ENCODE measurements at regions of chr9 and their contacts with region 1.

Region 1: GRCh38 chr9:121107041-121107440 is 32.3 kb downstream of the CNTRL start:
- DNase-seq: peak; percentile 39
- H3K4me3 ChIP-seq: no peak overlapping the region
- H3K27ac ChIP-seq: no peak overlapping the region
- H3K4me1 ChIP-seq: no peaks in the 10 kb centered on the region
- H3K27me3 ChIP-seq: no peaks in the 10 kb centered on the region
- CTCF ChIP-seq: peak; percentile 46 to 69

Region 2: DNA sequence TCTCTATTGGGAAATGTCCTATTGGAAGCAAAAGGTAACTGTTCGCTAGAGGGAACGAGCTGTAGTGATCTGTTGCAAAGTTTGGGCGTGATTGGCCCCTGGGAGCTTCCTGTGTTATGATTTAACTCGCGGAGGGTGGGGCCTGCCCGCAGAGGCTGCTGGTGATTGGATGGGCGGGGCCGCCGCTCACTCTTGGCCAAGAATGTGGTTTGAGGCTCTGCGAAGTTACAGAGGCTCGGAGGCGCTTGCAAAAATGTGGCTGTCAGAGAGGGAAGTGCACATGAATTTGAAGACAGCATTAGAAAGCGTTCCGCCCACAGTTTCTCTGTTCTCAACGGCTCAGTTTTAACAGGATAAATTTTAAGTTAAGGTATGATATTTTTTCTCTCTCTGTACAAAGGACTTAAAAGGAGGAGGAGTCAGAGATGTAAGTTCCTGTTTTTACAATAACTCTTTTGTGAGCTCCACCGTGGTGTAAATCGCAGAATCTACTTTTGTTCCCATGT is 14.6 kb after region 1 on chr9:
- CTCF ChIA-PET with region 1: no interaction called
- dilution Hi-C with region 1: no loop called
- in situ Hi-C with region 1: no loop called
- intact Hi-C with region 1: no loop called
- DNase-seq: peak; percentile 96
- H3K4me3 ChIP-seq: peak overlapping the region; percentile 49 to 88 (median 58)
- H3K27ac ChIP-seq: peak overlapping the region; percentile 71
- H3K4me1 ChIP-seq: peaks cover 11% of the 10 kb centered on the region
- H3K27me3 ChIP-seq: no peaks in the 10 kb centered on the region
- CTCF ChIP-seq: peak in 1 of 2 donors; percentile 37

Region 3: DNA sequence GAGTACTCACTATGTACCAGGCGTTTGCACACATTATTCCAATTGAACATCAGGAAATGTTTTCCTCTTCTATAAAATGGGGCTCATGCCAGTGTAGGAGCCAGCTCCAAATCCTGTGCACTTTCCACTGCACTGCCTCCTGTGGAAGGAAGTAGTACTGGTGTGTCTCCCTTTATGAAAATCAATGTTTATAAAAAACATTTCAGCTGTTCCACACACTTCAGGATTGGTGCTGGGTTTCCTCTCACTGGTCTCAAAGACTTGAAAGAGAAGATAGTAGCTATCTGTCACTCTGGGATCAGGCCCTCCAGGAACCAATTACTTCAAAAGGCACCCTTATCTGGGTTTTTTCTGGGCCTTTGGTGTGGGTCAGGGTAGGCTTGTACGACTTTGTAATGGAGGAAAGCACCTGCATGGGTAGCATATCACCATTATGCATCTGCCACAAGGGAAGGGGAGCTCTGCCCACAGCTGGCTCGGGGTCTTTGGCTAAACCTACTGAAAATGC is 62.1 kb after region 1 on chr9:
- CTCF ChIA-PET with region 1: no interaction called
- dilution Hi-C with region 1: no loop called
- in situ Hi-C with region 1: no loop called
- intact Hi-C with region 1: loop called (anchors 5 kb)
- DNase-seq: no peak
- H3K4me3 ChIP-seq: no peak overlapping the region
- H3K27ac ChIP-seq: no peak overlapping the region
- H3K4me1 ChIP-seq: no peaks in the 10 kb centered on the region
- H3K27me3 ChIP-seq: no peaks in the 10 kb centered on the region
- CTCF ChIP-seq: peak; percentile 51

Measured in mammary epithelial cell (primary cell).